B cell (primary cell): ENCODE measurements at regions of chr3 and their contacts with region 1.

Region 1: GRCh38 chr3:112128843-112129727 is 4.0 kb downstream of the GCSAM start:
- DNase-seq: peak; percentile 94
- ATAC-seq: peak; percentile 72
- H3K4me3 ChIP-seq: no peak overlapping the region
- H3K4me3 Mint-ChIP-seq: peak overlapping the region; percentile 50
- H3K27ac ChIP-seq: peak overlapping the region; percentile 93 to 98
- H3K27ac Mint-ChIP-seq: peak overlapping the region; percentile 91
- H3K4me1 ChIP-seq: peaks cover 76 to 90% of the 10 kb centered on the region in 2 donors
- H3K4me1 Mint-ChIP-seq: peaks cover 89% of the 10 kb centered on the region
- H3K27me3 ChIP-seq: no peaks in the 10 kb centered on the region
- H3K27me3 Mint-ChIP-seq: no peaks in the 10 kb centered on the region
- CTCF ChIP-seq: no peak

Region 2: GRCh38 chr3:112117841-112118571 is 11.1 kb before region 1 on chr3:
- CTCF ChIA-PET with region 1: interaction called, 17 read pairs
- POLR2A ChIA-PET with region 1: interaction called, 4 read pairs
- intact Hi-C with region 1: loop called (anchors 1 kb)
- DNase-seq: peak; percentile 82
- ATAC-seq: peak; percentile 62
- H3K4me3 ChIP-seq: peak overlapping the region in 1 of 5 experiments; percentile 18
- H3K4me3 Mint-ChIP-seq: peak overlapping the region; percentile 79
- H3K27ac ChIP-seq: peak overlapping the region; percentile 67 to 78
- H3K27ac Mint-ChIP-seq: peak overlapping the region; percentile 86
- H3K4me1 ChIP-seq: peaks cover 94 to 95% of the 10 kb centered on the region in 2 donors
- H3K4me1 Mint-ChIP-seq: peaks cover 89% of the 10 kb centered on the region
- H3K27me3 ChIP-seq: no peaks in the 10 kb centered on the region
- H3K27me3 Mint-ChIP-seq: no peaks in the 10 kb centered on the region
- CTCF ChIP-seq: peak; percentile 40

Region 3: GRCh38 chr3:112561731-112562688 is 432.9 kb after region 1 on chr3 and contains the starts of genes ATG3 and SLC35A5:
- CTCF ChIA-PET with region 1: no interaction called
- POLR2A ChIA-PET with region 1: no interaction called
- intact Hi-C with region 1: loop called (anchors 5 kb)
- DNase-seq: peak; percentile 99
- ATAC-seq: peak; percentile 79
- H3K4me3 ChIP-seq: peak within 1 kb of the TSS; percentile 75 to 99 (median 94)
- H3K4me3 Mint-ChIP-seq: peak within 1 kb of the TSS; percentile 99
- H3K27ac ChIP-seq: peak within 1 kb of the TSS; percentile 93 to 96
- H3K27ac Mint-ChIP-seq: peak within 1 kb of the TSS; percentile 100
- H3K4me1 ChIP-seq: peaks cover 23 to 34% of the 10 kb centered on the region in 2 donors
- H3K4me1 Mint-ChIP-seq: peaks cover 50% of the 10 kb centered on the region
- H3K27me3 ChIP-seq: no peaks in the 10 kb centered on the region
- H3K27me3 Mint-ChIP-seq: no peaks in the 10 kb centered on the region
- CTCF ChIP-seq: no peak
- total RNA-seq, gene ATG3: 48.8 and 54.9 TPM in 2 replicates
- total RNA-seq, gene SLC35A5: 32.1 and 34.9 TPM in 2 replicates